Adrenal gland (tissue), 19 donors: ENCODE measurements at regions of chr2 and their contacts with region 1.

Region 1: DNA sequence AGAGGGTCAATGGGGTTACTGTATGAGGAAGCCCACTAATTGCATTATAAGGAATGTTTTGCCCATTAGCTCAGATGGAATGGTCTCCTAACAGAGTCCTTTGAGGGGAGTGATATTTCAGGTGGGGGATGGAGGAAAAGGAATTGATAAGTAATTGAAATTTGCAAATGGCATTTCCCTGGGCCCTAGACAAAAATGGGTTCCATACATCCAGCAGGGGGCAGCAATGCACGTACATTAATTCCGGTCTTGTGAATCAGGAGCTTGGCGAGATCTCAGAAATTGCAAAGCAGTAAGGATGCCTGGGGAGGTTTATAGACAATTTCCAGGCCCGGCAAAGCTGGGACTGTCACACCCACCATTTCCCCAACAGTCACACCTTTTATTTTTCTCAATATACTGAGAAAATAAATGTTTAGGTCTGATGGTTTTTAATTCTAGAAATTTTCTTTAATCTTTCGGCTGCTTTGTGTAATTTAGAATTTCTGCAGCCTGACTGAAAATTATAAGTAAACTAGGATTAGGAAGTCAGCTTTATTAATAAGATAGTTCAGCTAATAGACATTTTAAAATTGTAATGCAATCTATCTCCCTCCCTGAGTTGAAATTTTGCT is 122.8 kb downstream of the LYPD1 start:
- DNase-seq: peak; percentile 64 to 88 (median 77)
- H3K4me3 ChIP-seq: no peak overlapping the region
- H3K27ac ChIP-seq: no peak overlapping the region
- H3K4me1 ChIP-seq: no peaks in the 10 kb centered on the region
- H3K27me3 ChIP-seq: no peaks in the 10 kb centered on the region
- CTCF ChIP-seq: peak; percentile 50 to 74 (median 61)
- POLR2A ChIP-seq: no peak

Region 2: GRCh38 chr2:132605236-132606180 is 58.3 kb after region 1 on chr2:
- intact Hi-C with region 1: no loop called
- DNase-seq: no peak
- H3K4me3 ChIP-seq: no peak overlapping the region
- H3K27ac ChIP-seq: no peak overlapping the region
- H3K4me1 ChIP-seq: no peaks in the 10 kb centered on the region
- H3K27me3 ChIP-seq: no peaks in the 10 kb centered on the region
- CTCF ChIP-seq: no peak
- POLR2A ChIP-seq: no peak

Region 3: GRCh38 chr2:133171393-133172004 is 624.3 kb after region 1 on chr2:
- intact Hi-C with region 1: loop called in 1 of 2 experiments (anchors 10 kb)
- DNase-seq: peak in 2 of 7 donors; percentile 8 to 9
- H3K4me3 ChIP-seq: no peak overlapping the region
- H3K27ac ChIP-seq: no peak overlapping the region
- H3K4me1 ChIP-seq: no peaks in the 10 kb centered on the region
- H3K27me3 ChIP-seq: no peaks in the 10 kb centered on the region
- CTCF ChIP-seq: peak; percentile 37 to 68 (median 60)
- POLR2A ChIP-seq: no peak